ENCODE measurements at regions of chr18 and their contacts with region 1.

Region 1: DNA sequence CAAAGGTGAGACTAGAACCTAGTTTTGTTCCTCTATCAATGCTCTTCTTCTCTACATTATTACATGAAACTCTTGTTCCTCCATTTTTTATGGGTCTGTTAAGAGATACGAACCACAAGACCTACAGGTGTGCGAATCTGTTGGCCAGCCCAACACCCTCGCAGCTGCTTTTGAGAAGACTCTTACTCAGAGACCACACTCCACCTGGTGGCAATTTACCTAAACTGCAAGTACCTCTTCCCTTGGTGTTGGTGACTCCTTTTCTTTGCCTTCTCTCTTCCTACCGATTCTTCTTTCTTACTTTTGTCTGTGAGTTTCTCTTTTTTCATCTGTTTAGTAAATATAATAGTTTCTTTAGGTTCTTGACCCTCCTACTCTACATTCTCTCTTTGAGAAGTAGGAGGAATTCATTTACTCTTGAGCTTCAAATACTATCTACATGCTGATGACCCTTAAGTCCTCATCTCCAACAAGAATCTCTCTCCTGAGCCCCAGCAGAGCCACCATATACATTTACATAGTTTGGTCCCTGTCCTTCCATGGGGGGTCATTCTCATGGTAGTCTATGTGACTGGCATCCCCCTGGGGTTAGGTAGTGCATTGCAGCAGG is 81.8 kb upstream of the GAREM1 start:
- DNase-seq: peak; percentile 71
- H3K4me3 Mint-ChIP-seq: no peak overlapping the region
- H3K27ac Mint-ChIP-seq: no peak overlapping the region
- H3K4me1 Mint-ChIP-seq: peaks cover 1% of the 10 kb centered on the region
- H3K27me3 Mint-ChIP-seq: peaks cover 5% of the 10 kb centered on the region

Region 2: DNA sequence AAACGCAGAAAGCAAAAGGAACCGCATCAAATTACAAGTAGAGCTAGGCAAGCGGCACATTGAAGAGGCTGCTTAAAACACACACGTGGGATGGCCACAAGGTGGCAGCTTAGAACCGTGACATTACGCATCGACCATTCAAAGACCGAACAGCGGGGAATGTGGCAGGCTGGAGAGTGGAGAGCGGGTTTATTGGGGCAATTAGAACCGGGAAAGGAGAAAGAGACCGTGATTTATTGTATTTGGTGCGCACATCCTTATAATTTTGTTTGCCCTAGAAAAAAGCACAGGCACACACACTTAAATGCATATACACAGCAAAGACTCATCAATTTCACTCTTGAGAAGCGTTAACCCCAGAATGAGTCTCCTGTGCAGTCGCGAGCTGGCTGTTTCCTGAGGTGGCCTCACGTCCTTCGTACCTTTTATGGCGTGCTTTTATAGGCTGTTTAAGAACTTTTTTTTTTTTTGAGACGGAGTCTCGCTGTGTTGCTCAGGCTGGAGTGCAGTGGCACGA is 394.4 kb before region 1 on chr18:
- CTCF ChIA-PET with region 1: interaction called, 13 read pairs
- POLR2A ChIA-PET with region 1: no interaction called
- DNase-seq: peak; percentile 80
- H3K4me3 Mint-ChIP-seq: peak overlapping the region; percentile 30
- H3K27ac Mint-ChIP-seq: no peak overlapping the region
- H3K4me1 Mint-ChIP-seq: peaks cover 6% of the 10 kb centered on the region
- H3K27me3 Mint-ChIP-seq: peaks cover 3% of the 10 kb centered on the region

Region 3: DNA sequence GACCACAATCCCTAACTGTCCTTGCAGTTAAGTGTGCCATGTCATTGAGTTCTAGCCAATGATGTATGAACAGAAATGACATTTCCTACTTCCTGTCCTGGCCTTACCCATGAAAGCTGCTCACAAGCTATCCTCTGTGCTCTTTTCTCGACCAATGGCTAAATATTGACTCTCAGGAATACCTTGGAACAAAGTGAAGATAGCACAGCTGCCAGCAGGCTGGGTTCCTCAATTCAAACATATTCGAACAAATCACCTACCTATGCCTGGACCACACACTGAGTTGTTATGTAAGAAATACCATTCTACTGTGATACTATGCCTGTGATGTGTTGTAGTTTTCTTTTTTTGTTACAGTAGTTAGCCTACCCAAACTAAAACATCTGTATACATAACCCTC is 146.9 kb before region 1 on chr18:
- CTCF ChIA-PET with region 1: no interaction called
- POLR2A ChIA-PET with region 1: no interaction called
- DNase-seq: no peak
- H3K4me3 Mint-ChIP-seq: no peak overlapping the region
- H3K27ac Mint-ChIP-seq: no peak overlapping the region
- H3K4me1 Mint-ChIP-seq: no peaks in the 10 kb centered on the region
- H3K27me3 Mint-ChIP-seq: peaks cover 9% of the 10 kb centered on the region

Measured in activated CD4-positive, alpha-beta T cell treated with anti-CD3 and anti-CD28 coated beads, Interleukin-2, amount 10 ng/mL, durations not matched to agents 7 days and 5 days (primary cell).